Sigmoid colon (tissue), 7 donors: ENCODE measurements at regions of chrX and their contacts with region 1.

Region 1: DNA sequence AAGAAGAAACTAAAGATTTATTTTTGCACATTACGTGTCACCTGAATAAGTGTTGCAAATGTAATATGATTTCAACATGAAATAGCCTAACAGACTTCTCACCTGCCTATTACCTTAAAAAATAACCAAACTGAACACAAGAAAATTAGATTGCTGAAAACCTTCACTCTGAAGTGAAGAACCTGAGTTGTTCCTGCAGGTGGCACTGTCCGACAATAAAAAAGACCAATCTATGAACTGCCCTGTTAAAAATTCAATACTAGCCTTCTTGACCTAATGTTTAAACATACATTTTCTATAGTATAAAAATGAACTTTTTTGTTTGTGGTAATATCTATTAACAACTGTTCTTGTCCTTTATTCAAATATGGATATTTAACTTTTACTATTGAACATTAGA is 69.2 kb upstream of the PNPLA4 start:
- DNase-seq: no peak
- H3K4me3 ChIP-seq: no peak overlapping the region
- H3K27ac ChIP-seq: no peak overlapping the region
- H3K4me1 ChIP-seq: no peaks in the 10 kb centered on the region
- H3K27me3 ChIP-seq: no peaks in the 10 kb centered on the region
- CTCF ChIP-seq: peak in 3 of 4 experiments; percentile 23 to 49 (median 24)
- EP300 ChIP-seq: no peak
- POLR2A ChIP-seq: no peak

Region 2: GRCh38 chrX:8743126-8743732 is 746.8 kb after region 1 on chrX:
- intact Hi-C with region 1: loop called (anchors 2 kb)
- DNase-seq: no peak
- H3K4me3 ChIP-seq: no peak overlapping the region
- H3K27ac ChIP-seq: no peak overlapping the region
- H3K4me1 ChIP-seq: no peaks in the 10 kb centered on the region
- H3K27me3 ChIP-seq: no peaks in the 10 kb centered on the region
- CTCF ChIP-seq: peak in 3 of 4 experiments; percentile 21 to 46 (median 29)
- EP300 ChIP-seq: no peak
- POLR2A ChIP-seq: no peak